Posterior vena cava (tissue), 2 donors: ENCODE measurements at regions of chr6 and their contacts with region 1.

Region 1: GRCh38 chr6:13026557-13026956 is 301.8 kb downstream of the TBC1D7 start:
- DNase-seq: no peak

Region 2: GRCh38 chr6:11890849-11891248 is 1135.7 kb before region 1 on chr6:
- intact Hi-C with region 1: loop called in 1 of 2 experiments (anchors 5 kb)
- DNase-seq: no peak

Region 3: GRCh38 chr6:13066050-13066449 is 39.5 kb after region 1 on chr6:
- intact Hi-C with region 1: loop called in 1 of 2 experiments (anchors 2 kb)
- DNase-seq: no peak